ENCODE measurements at regions of chr13 and their contacts with region 1.

Region 1: GRCh38 chr13:21069561-21070004 is 8.2 kb upstream of the LATS2 start:
- DNase-seq: peak; percentile 88
- H3K4me3 ChIP-seq: no peak overlapping the region
- H3K27ac ChIP-seq: peak overlapping the region; percentile 66
- H3K27me3 ChIP-seq: no peaks in the 10 kb centered on the region
- CTCF ChIP-seq: no peak

Region 2: DNA sequence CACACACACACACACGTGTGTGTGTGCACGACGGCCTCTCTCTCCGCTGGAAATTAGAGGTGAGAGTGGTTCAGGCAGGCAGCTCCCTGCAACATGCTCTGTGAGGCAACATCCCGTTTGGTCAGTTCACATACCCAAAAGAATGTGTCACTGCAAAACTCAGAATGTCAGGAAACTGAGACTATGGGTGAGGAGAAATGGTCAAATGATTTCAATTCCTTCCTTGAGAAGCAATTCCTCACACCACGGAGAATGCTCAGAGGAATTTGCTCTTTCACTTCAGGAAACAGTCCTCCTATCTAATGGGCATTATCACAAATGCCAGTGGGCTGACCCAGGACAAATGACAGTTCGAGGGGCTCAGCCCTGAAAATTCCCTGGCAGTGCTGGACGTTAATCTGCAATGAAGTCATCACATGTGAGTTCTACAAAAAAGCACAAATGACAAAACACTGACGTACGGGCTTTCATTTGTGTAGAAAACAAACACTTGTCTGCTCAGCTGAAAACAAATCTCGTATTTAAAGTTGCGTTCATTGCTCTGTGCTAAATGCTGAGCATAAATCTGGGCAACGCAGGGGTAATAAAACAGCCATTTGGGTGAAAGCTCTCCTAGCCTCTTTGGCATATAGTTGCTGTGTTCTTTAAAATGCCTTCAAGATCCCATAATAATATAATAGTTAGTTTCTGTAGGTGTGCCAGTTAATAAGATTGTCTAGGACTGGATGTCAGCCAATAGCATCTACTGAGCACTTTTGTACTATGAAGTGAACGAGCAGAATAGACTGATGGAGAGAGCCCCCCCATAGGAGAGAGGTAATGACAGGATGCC is 10.4 kb after region 1 on chr13:
- CTCF ChIA-PET with region 1: interaction called, 3 read pairs
- POLR2A ChIA-PET with region 1: interaction called, 12 read pairs
- DNase-seq: peak; percentile 43
- H3K4me3 ChIP-seq: peak overlapping the region; percentile 39
- H3K27ac ChIP-seq: peak overlapping the region; percentile 32
- H3K27me3 ChIP-seq: no peaks in the 10 kb centered on the region
- CTCF ChIP-seq: no peak

Measured in AG04450 (cell line).